CD4-positive, alpha-beta T cell (primary cell): ENCODE measurements at regions of chr7 and their contacts with region 1.

Region 1: DNA sequence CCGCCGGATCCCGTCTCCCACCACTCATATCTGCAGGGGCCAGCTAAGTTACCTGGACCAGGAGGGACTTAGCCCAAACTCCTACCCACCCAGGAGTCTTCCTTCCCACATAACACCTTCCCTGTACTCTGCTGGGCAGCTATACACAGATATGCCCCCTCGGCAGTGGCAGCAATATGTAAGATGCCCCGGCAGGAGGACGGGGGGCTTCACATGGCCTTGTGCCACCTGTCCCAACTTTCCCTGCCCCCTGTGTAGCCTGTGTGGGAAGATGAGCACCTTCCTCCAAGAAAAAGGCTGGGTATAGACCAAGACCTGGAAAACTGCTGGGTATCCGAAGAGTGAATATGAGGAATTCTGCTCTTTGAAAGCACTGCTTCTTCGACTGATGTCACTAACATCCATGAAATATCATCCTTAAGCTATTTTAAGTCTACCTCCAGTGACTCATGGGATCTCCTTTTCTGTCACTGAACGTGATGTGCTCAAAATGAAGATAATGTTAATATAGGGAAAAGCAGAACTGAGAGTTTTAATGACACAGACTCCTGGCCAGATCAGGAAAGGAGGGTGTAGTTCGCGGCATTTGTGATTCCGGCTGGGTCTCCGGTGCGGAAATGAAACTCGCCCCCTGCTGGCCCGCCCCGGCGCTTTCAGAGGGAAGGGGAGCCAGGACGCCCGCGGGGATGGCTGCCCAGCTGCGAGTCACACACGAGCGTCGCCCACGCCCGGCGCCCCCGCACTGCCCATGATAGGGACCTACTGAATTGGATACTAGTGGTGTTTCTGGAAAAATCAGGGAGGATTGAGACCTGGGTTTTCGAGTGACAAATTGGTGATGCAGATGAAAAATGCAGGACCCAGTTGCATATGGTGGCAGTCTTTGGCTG is 256.9 kb upstream of the NFE2L3 start:
- DNase-seq: peak; percentile 38 to 80 (median 56)
- ATAC-seq: peak; percentile 54
- H3K4me3 ChIP-seq: peak overlapping the region; percentile 9
- H3K4me3 Mint-ChIP-seq: peak overlapping the region; percentile 49
- H3K27ac ChIP-seq: no peak overlapping the region
- H3K27ac Mint-ChIP-seq: no peak overlapping the region
- H3K4me1 ChIP-seq: peaks cover 25% of the 10 kb centered on the region
- H3K4me1 Mint-ChIP-seq: peaks cover 31% of the 10 kb centered on the region
- H3K27me3 ChIP-seq: no peaks in the 10 kb centered on the region
- H3K27me3 Mint-ChIP-seq: no peaks in the 10 kb centered on the region
- CTCF ChIP-seq: peak; percentile 79

Region 2: DNA sequence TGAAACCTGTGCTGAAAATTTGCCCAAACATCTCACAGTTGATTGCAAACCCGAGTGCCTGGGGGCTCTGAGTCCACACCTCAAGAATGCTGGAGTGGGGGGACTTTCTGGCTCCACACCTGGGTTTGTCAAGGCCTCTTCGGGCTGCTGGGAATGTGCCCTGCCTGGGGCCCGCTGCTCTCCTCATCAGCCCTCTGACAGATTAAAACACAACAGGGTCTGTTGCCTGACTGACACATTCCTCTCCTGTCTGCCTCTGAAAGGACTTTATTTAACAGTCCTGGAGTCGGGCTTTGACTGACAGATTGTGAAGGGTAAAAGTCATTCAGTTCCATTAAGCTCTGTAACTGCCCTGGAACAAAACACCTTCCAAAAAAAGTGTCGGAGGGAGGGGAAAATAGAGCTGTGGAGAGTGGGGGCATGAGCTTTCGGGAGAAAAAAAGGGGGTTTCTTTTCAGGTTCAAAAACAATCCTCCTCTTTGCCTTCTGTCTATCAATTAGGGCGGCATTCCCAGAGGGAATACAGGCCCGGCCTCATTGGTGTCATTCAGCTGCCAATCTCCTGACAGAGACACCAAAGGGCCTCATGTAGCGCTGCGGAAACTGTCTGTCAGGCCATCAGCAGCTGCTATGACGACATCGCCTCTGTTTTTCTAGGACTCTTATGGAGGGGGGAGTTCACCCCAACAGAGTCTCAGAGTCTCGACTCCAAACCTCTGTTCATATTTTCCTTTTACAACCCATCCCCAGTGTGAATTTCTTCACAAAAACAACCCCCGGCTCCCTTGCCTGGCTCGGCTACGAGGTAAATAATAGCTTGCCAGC is 142.0 kb before region 1 on chr7:
- CTCF ChIA-PET with region 1: no interaction called
- POLR2A ChIA-PET with region 1: no interaction called
- intact Hi-C with region 1: no loop called
- DNase-seq: no peak
- ATAC-seq: no peak
- H3K4me3 ChIP-seq: no peak overlapping the region
- H3K4me3 Mint-ChIP-seq: no peak overlapping the region
- H3K27ac ChIP-seq: no peak overlapping the region
- H3K27ac Mint-ChIP-seq: no peak overlapping the region
- H3K4me1 ChIP-seq: no peaks in the 10 kb centered on the region
- H3K4me1 Mint-ChIP-seq: no peaks in the 10 kb centered on the region
- H3K27me3 ChIP-seq: peaks cover 0 to 3% of the 10 kb centered on the region in 2 experiments
- H3K27me3 Mint-ChIP-seq: peaks cover 10% of the 10 kb centered on the region
- CTCF ChIP-seq: no peak

Region 3: GRCh38 chr7:25951031-25951948 is 56.1 kb after region 1 on chr7:
- CTCF ChIA-PET with region 1: interaction called, 3 read pairs
- POLR2A ChIA-PET with region 1: interaction called, 3 read pairs
- intact Hi-C with region 1: loop called in 1 of 2 experiments (anchors 2 kb)
- DNase-seq: peak; percentile 77 to 96 (median 88)
- ATAC-seq: peak; percentile 98
- H3K4me3 ChIP-seq: peak overlapping the region; percentile 64
- H3K4me3 Mint-ChIP-seq: peak overlapping the region; percentile 96
- H3K27ac ChIP-seq: no peak overlapping the region
- H3K27ac Mint-ChIP-seq: peak overlapping the region; percentile 69
- H3K4me1 ChIP-seq: peaks cover 19% of the 10 kb centered on the region
- H3K4me1 Mint-ChIP-seq: peaks cover 30% of the 10 kb centered on the region
- H3K27me3 ChIP-seq: no peaks in the 10 kb centered on the region
- H3K27me3 Mint-ChIP-seq: no peaks in the 10 kb centered on the region
- CTCF ChIP-seq: no peak

Region 4: GRCh38 chr7:26156454-26157365 is 261.6 kb after region 1 on chr7:
- CTCF ChIA-PET with region 1: no interaction called
- POLR2A ChIA-PET with region 1: no interaction called
- intact Hi-C with region 1: no loop called
- DNase-seq: peak in 8 of 14 experiments; percentile 17 to 92 (median 40)
- ATAC-seq: peak; percentile 52
- H3K4me3 ChIP-seq: peak overlapping the region; percentile 40
- H3K4me3 Mint-ChIP-seq: peak overlapping the region; percentile 66
- H3K27ac ChIP-seq: peak overlapping the region; percentile 53 to 85
- H3K27ac Mint-ChIP-seq: peak overlapping the region; percentile 77
- H3K4me1 ChIP-seq: peaks cover 63% of the 10 kb centered on the region
- H3K4me1 Mint-ChIP-seq: peaks cover 66% of the 10 kb centered on the region
- H3K27me3 ChIP-seq: no peaks in the 10 kb centered on the region
- H3K27me3 Mint-ChIP-seq: no peaks in the 10 kb centered on the region
- CTCF ChIP-seq: no peak

Region 5: GRCh38 chr7:26284995-26285632 is 390.0 kb after region 1 on chr7:
- CTCF ChIA-PET with region 1: interaction called, 5 read pairs
- POLR2A ChIA-PET with region 1: interaction called, 3 read pairs
- intact Hi-C with region 1: loop called (anchors 5 kb)
- DNase-seq: peak in 3 of 14 experiments; percentile 38 to 52 (median 47)
- ATAC-seq: peak; percentile 98
- H3K4me3 ChIP-seq: no peak overlapping the region
- H3K4me3 Mint-ChIP-seq: no peak overlapping the region
- H3K27ac ChIP-seq: no peak overlapping the region
- H3K27ac Mint-ChIP-seq: no peak overlapping the region
- H3K4me1 ChIP-seq: peaks cover under 1% of the 10 kb centered on the region
- H3K4me1 Mint-ChIP-seq: peaks cover 6% of the 10 kb centered on the region
- H3K27me3 ChIP-seq: no peaks in the 10 kb centered on the region
- H3K27me3 Mint-ChIP-seq: no peaks in the 10 kb centered on the region
- CTCF ChIP-seq: peak; percentile 12

Region 6: DNA sequence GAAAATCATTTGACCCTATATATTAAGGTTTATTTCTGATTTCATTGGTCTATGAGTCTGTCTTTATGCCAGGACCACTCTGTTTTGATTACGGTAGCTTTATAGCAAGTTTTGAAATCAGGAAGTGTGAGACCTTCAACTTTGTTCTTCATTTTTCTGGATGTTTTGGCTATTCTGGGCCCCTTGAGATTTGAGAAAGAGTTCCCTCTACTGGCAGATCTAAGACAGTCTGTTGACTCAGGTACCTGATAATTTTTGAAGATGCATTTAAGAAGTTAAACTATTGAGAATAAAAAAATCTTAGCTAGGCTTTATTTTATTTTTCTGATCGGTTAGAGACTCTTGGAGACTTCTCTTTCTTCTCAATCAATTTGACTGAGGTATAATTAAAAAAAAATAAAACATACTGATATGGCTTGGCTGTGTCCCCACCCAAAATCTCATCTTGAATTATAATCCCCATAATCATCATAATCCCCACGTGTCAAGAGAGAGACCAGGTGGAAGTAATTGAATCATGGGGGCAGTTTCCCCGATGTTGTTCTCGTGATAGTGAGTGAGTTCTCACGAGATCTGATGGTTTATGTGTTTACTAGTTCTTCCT is 605.7 kb after region 1 on chr7:
- CTCF ChIA-PET with region 1: no interaction called
- POLR2A ChIA-PET with region 1: no interaction called
- intact Hi-C with region 1: loop called (anchors 5 to 10 kb)
- DNase-seq: peak in 3 of 14 experiments; percentile 23 to 39 (median 31)
- ATAC-seq: no peak
- H3K4me3 ChIP-seq: no peak overlapping the region
- H3K4me3 Mint-ChIP-seq: no peak overlapping the region
- H3K27ac ChIP-seq: no peak overlapping the region
- H3K27ac Mint-ChIP-seq: no peak overlapping the region
- H3K4me1 ChIP-seq: no peaks in the 10 kb centered on the region
- H3K4me1 Mint-ChIP-seq: no peaks in the 10 kb centered on the region
- H3K27me3 ChIP-seq: peaks cover 3% of the 10 kb centered on the region in 2 experiments
- H3K27me3 Mint-ChIP-seq: peaks cover 8% of the 10 kb centered on the region
- CTCF ChIP-seq: peak; percentile 46

Region 7: DNA sequence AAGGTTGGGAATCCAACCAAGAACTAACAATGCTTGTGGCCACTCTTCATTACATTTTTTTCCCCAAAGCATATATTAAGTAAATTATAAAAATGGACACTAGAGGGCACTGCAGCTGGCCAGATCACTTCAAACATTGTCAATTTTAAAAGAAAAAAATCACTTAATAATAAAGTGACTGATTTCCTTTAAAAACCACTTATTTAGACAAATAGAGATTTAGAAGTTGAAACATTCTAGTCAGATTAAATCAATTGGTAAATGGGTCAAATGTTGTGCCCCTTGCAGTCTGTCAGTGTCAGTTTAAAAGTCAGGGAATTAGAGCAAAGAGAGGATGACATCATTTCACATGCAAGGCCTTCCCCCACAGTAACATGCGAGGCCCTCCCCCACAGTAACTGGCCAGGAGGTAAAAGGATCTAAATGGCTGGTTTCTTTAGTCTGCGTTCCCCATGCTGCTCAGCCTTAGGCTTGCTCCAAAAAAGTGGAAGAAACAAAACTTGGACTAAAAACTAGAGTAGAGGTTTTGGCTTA is 791.4 kb after region 1 on chr7:
- CTCF ChIA-PET with region 1: interaction called, 3 read pairs
- POLR2A ChIA-PET with region 1: no interaction called
- intact Hi-C with region 1: loop called in 1 of 2 experiments (anchors 5 kb)
- DNase-seq: peak in 4 of 14 experiments; percentile 7 to 65 (median 50)
- ATAC-seq: peak; percentile 54
- H3K4me3 ChIP-seq: no peak overlapping the region
- H3K4me3 Mint-ChIP-seq: no peak overlapping the region
- H3K27ac ChIP-seq: no peak overlapping the region
- H3K27ac Mint-ChIP-seq: no peak overlapping the region
- H3K4me1 ChIP-seq: no peaks in the 10 kb centered on the region
- H3K4me1 Mint-ChIP-seq: no peaks in the 10 kb centered on the region
- H3K27me3 ChIP-seq: peaks cover 0 to 8% of the 10 kb centered on the region in 2 experiments
- H3K27me3 Mint-ChIP-seq: peaks cover 76% of the 10 kb centered on the region
- CTCF ChIP-seq: peak; percentile 84